ENCODE measurements at regions of chrX and their contacts with region 1.

Region 1: DNA sequence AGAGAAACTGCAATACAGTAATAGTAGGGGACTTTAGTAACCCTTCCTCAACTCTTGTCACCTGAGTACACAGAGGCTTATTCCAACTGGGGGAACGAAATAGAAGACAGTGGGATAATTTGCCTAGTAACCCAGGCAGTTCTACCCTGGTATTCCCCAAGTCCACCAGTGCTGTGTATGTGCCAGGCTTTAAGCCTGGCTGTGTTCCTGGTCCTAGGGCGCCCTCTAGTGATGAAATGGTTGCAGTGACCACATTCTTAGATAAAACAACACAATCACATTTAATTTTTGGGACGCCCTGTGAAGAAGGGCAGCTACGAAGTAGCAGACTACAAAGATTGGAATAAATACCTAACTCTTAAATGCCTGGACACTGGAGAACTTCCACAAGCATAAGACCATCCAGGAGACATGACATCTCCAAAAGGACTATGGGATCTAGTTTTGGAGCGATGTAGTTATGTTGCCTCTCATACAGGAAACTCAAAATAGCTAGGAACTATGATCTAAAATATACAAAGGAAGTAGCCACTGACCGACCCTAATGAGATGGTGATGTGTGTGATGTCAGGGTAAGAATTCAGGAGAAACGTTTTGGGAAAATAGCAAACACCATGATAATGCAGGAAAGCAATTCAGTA is 288.5 kb upstream of the ZCCHC13 start:
- DNase-seq: peak in 1 of 2 donors; percentile 30
- ATAC-seq: peak; percentile 52 to 76
- H3K4me3 ChIP-seq: no peak overlapping the region
- H3K27ac ChIP-seq: no peak overlapping the region
- H3K4me1 ChIP-seq: no peaks in the 10 kb centered on the region
- H3K27me3 ChIP-seq: no peaks in the 10 kb centered on the region
- CTCF ChIP-seq: peak; percentile 51 to 88 (median 73)
- POLR2A ChIP-seq: no peak

Region 2: GRCh38 chrX:73903941-73904340 is 111.6 kb before region 1 on chrX:
- in situ Hi-C with region 1: no loop called
- intact Hi-C with region 1: no loop called
- DNase-seq: no peak
- ATAC-seq: no peak
- H3K4me3 ChIP-seq: no peak overlapping the region
- H3K27ac ChIP-seq: no peak overlapping the region
- H3K4me1 ChIP-seq: no peaks in the 10 kb centered on the region
- H3K27me3 ChIP-seq: no peaks in the 10 kb centered on the region
- CTCF ChIP-seq: no peak
- POLR2A ChIP-seq: no peak

Region 3: DNA sequence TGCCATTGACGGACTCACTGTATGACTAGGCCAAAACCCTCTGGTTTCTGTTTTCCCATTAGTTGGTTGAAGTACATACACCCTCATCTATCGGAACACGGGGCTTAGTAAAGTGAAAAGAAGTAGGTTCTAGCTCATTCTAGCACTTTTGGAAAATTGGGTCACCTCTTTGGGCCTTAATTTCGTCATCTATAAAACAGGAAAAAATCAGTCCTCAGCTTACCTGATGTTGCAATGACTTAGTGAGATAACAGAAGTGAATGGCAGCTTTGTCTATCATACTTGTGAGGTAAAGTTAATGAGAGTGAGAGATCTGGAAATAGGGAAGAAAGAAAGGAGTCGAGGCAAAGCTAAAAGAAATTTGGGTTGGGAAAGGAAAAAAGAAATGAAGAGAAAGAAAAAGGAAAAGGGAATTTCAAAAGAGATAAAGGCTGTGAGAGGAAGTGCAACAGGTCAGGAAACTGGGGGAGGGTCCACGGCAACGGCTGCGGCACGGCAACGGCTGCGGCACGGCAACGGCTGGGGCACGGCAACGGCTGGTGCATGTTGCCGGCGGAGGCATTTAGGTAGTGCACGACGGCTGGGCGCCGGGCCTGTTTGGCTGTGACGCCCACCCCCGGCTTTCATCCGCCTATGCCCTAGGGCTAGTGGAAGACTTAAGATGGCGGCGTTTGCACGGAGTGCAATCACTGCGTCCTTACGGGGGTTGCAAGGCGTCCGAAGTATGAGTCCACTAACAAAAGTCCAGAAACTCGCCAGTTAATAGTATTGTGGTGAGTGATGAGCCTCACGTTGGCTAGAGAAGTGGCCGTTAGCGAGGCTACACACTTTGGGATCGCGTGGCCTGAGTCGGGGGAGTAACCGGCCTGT is 71.6 kb before region 1 on chrX:
- in situ Hi-C with region 1: no loop called
- intact Hi-C with region 1: loop called (anchors 5 kb)
- DNase-seq: peak; percentile 64 to 80
- ATAC-seq: peak; percentile 96 to 98
- H3K4me3 ChIP-seq: peak overlapping the region; percentile 67 to 85 (median 70)
- H3K27ac ChIP-seq: peak overlapping the region; percentile 78 to 91 (median 84)
- H3K4me1 ChIP-seq: peaks cover 0 to 27% of the 10 kb centered on the region in 2 donors
- H3K27me3 ChIP-seq: no peaks in the 10 kb centered on the region
- CTCF ChIP-seq: no peak
- POLR2A ChIP-seq: peak; percentile 49 to 67

Region 4: GRCh38 chrX:74343343-74344279 is 328.1 kb after region 1 on chrX:
- in situ Hi-C with region 1: no loop called
- intact Hi-C with region 1: loop called (anchors 5 kb)
- DNase-seq: peak; percentile 11 to 18
- ATAC-seq: peak in 1 of 2 donors; percentile 61
- H3K4me3 ChIP-seq: no peak overlapping the region
- H3K27ac ChIP-seq: no peak overlapping the region
- H3K4me1 ChIP-seq: no peaks in the 10 kb centered on the region
- H3K27me3 ChIP-seq: no peaks in the 10 kb centered on the region
- CTCF ChIP-seq: peak in 4 of 5 experiments; percentile 46 to 65 (median 56)
- POLR2A ChIP-seq: no peak

Measured in gastrocnemius medialis (tissue), 4 donors.